ENCODE measurements at regions of chr2 and their contacts with region 1.

Region 1: DNA sequence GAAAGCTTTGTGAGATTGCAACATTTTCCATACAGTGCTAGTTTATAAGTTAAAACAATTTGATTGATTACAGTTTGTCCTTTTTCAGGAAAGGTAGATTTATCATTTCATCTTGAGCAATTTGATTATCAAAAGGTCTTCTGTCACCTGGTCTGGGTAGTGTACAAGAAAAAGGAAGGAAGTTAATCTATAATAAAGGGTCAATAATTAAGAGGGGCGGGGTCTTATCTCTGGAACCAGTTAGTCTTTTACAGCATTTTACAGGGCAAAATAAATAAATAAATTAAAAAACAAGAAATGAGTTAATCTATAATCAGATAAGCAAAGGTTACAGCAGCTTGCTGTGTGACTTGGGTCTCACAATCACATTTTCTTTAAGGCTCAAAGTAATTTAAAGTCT is 277.8 kb upstream of the GYPC start:
- DNase-seq: no peak
- ATAC-seq: peak in 2 of 4 donors; percentile 62 to 75
- H3K4me3 ChIP-seq: no peak overlapping the region
- H3K27ac ChIP-seq: peak overlapping the region in 1 of 4 donors; percentile 6
- H3K4me1 ChIP-seq: peaks cover 0 to 3% (median 0%) of the 10 kb centered on the region in 3 donors
- H3K27me3 ChIP-seq: no peaks in the 10 kb centered on the region
- CTCF ChIP-seq: no peak

Region 2: DNA sequence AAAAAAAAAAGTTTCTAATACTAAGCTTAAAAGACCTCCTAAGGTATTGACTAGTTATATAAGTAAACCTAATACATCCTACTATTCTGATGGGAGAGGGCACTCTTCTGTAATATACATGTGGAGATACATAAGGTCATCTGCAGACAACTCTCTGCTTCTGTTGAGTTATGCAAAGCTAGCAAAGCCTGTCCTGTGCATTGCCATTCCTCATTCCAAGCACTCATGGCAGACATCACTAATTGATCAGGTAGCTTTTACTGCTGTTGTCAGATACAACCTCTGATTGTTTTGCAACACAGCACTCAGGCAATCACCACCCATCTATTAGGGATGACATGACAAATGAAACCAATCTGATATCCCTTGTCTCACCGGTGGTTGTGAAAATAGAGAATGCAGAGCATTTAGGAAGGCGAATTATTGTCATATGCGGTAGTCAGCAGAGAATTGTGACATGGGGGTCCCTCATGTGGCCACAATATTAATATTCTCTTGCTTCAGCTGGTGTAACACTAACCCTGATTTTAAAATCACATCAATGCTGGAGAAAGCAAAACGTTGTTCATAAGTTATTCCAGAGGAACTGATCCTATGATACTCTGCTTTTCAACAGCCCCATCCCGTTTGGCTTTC is 138.7 kb before region 1 on chr2:
- intact Hi-C with region 1: no loop called
- DNase-seq: no peak
- ATAC-seq: no peak
- H3K4me3 ChIP-seq: no peak overlapping the region
- H3K27ac ChIP-seq: no peak overlapping the region
- H3K4me1 ChIP-seq: no peaks in the 10 kb centered on the region
- H3K27me3 ChIP-seq: no peaks in the 10 kb centered on the region
- CTCF ChIP-seq: no peak

Region 3: GRCh38 chr2:126669772-126670171 is 291.6 kb after region 1 on chr2:
- intact Hi-C with region 1: loop called in 1 of 3 experiments (anchors 5 kb)
- DNase-seq: no peak
- ATAC-seq: peak in 1 of 4 donors; percentile 19
- H3K4me3 ChIP-seq: no peak overlapping the region
- H3K27ac ChIP-seq: no peak overlapping the region
- H3K4me1 ChIP-seq: peaks cover 0 to 4% (median 0%) of the 10 kb centered on the region in 3 donors
- H3K27me3 ChIP-seq: no peaks in the 10 kb centered on the region
- CTCF ChIP-seq: no peak

Measured in pancreas (tissue), 10 donors.